ENCODE measurements at regions of chr15 and their contacts with region 1.

Region 1: GRCh38 chr15:40038638-40039543 is at the start of gene SRP14:
- DNase-seq: peak; percentile 95
- ATAC-seq: peak; percentile 96
- H3K4me3 ChIP-seq: peak within 1 kb of the TSS; percentile 72 to 99 (median 96)
- H3K4me3 Mint-ChIP-seq: peak within 1 kb of the TSS; percentile 97
- H3K27ac ChIP-seq: peak within 1 kb of the TSS; percentile 93 to 95
- H3K27ac Mint-ChIP-seq: peak within 1 kb of the TSS; percentile 92
- H3K4me1 ChIP-seq: peaks cover 14 to 21% of the 10 kb centered on the region in 2 donors
- H3K4me1 Mint-ChIP-seq: peaks cover 28% of the 10 kb centered on the region
- H3K27me3 ChIP-seq: no peaks in the 10 kb centered on the region
- H3K27me3 Mint-ChIP-seq: no peaks in the 10 kb centered on the region
- CTCF ChIP-seq: peak; percentile 23
- total RNA-seq, gene SRP14: 112 and 120 TPM in 2 replicates

Region 2: GRCh38 chr15:39782441-39783138 is 256.3 kb before region 1 on chr15 and contains the start of gene FSIP1:
- CTCF ChIA-PET with region 1: interaction called, 4 read pairs
- POLR2A ChIA-PET with region 1: interaction called, 5 read pairs
- intact Hi-C with region 1: loop called (anchors 2 kb)
- DNase-seq: peak; percentile 98
- ATAC-seq: peak; percentile 99
- H3K4me3 ChIP-seq: peak within 1 kb of the TSS; percentile 81 to 98 (median 91)
- H3K4me3 Mint-ChIP-seq: peak within 1 kb of the TSS; percentile 85
- H3K27ac ChIP-seq: peak within 1 kb of the TSS; percentile 63 to 83
- H3K27ac Mint-ChIP-seq: peak within 1 kb of the TSS; percentile 97
- H3K4me1 ChIP-seq: peaks cover 17 to 18% of the 10 kb centered on the region in 2 donors
- H3K4me1 Mint-ChIP-seq: peaks cover 43% of the 10 kb centered on the region
- H3K27me3 ChIP-seq: peaks cover 0 to 5% (median under 1%) of the 10 kb centered on the region in 4 experiments
- H3K27me3 Mint-ChIP-seq: peaks cover 5% of the 10 kb centered on the region
- CTCF ChIP-seq: no peak
- total RNA-seq, gene FSIP1: 0.44 and 0.49 TPM in 2 replicates

Region 3: GRCh38 chr15:39920510-39921273 is 118.2 kb before region 1 on chr15:
- CTCF ChIA-PET with region 1: no interaction called
- POLR2A ChIA-PET with region 1: no interaction called
- intact Hi-C with region 1: loop called (anchors 1 kb)
- DNase-seq: peak; percentile 83
- ATAC-seq: peak; percentile 95
- H3K4me3 ChIP-seq: peak overlapping the region; percentile 67 to 90 (median 71)
- H3K4me3 Mint-ChIP-seq: peak overlapping the region; percentile 92
- H3K27ac ChIP-seq: peak overlapping the region in 1 of 2 donors; percentile 37
- H3K27ac Mint-ChIP-seq: peak overlapping the region; percentile 84
- H3K4me1 ChIP-seq: peaks cover 21 to 23% of the 10 kb centered on the region in 2 donors
- H3K4me1 Mint-ChIP-seq: peaks cover 16% of the 10 kb centered on the region
- H3K27me3 ChIP-seq: peaks cover 0 to 31% (median 19%) of the 10 kb centered on the region in 4 experiments
- H3K27me3 Mint-ChIP-seq: peaks cover 19% of the 10 kb centered on the region
- CTCF ChIP-seq: no peak

Region 4: DNA sequence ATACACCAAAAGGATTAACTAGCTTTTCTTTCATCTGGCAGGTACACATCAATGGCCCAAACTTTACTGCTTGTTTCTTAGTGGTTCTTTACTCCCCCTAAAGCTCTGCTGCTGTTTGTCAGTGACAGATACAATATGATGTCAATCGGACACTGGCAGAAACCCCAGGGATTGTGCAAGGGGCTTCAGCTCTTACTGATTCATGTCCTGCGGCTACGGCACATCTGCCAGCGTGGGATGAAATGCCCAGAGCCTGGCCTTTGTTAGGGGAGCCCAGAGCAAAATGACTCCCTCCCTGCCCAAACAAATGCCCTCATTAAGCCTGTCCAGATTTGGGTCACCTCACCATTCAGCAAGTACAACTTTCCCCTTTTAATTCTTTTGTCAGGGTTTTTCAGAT is 28.2 kb before region 1 on chr15:
- CTCF ChIA-PET with region 1: no interaction called
- POLR2A ChIA-PET with region 1: no interaction called
- intact Hi-C with region 1: no loop called
- DNase-seq: no peak
- ATAC-seq: no peak
- H3K4me3 ChIP-seq: no peak overlapping the region
- H3K4me3 Mint-ChIP-seq: no peak overlapping the region
- H3K27ac ChIP-seq: no peak overlapping the region
- H3K27ac Mint-ChIP-seq: no peak overlapping the region
- H3K4me1 ChIP-seq: no peaks in the 10 kb centered on the region
- H3K4me1 Mint-ChIP-seq: no peaks in the 10 kb centered on the region
- H3K27me3 ChIP-seq: no peaks in the 10 kb centered on the region
- H3K27me3 Mint-ChIP-seq: no peaks in the 10 kb centered on the region
- CTCF ChIP-seq: no peak

Region 5: GRCh38 chr15:40160689-40161688 is 122.1 kb after region 1 on chr15 and contains the start of gene BUB1B:
- CTCF ChIA-PET with region 1: interaction called, 4 read pairs
- POLR2A ChIA-PET with region 1: no interaction called
- intact Hi-C with region 1: loop called (anchors 1 kb)
- DNase-seq: peak; percentile 96
- ATAC-seq: peak; percentile 97
- H3K4me3 ChIP-seq: peak within 1 kb of the TSS; percentile 56 to 77 (median 71)
- H3K4me3 Mint-ChIP-seq: no peak within 1 kb of the TSS
- H3K27ac ChIP-seq: no peak within 1 kb of the TSS
- H3K27ac Mint-ChIP-seq: no peak within 1 kb of the TSS
- H3K4me1 ChIP-seq: peaks cover 10 to 14% of the 10 kb centered on the region in 2 donors
- H3K4me1 Mint-ChIP-seq: peaks cover 7% of the 10 kb centered on the region
- H3K27me3 ChIP-seq: no peaks in the 10 kb centered on the region
- H3K27me3 Mint-ChIP-seq: no peaks in the 10 kb centered on the region
- CTCF ChIP-seq: no peak
- total RNA-seq, gene BUB1B: 2.9 and 4.4 TPM in 2 replicates

Region 6: GRCh38 chr15:40564591-40565332 is 525.9 kb after region 1 on chr15 and contains the start of gene CCDC32:
- CTCF ChIA-PET with region 1: no interaction called
- POLR2A ChIA-PET with region 1: no interaction called
- intact Hi-C with region 1: no loop called
- DNase-seq: peak; percentile 96
- ATAC-seq: peak; percentile 90
- H3K4me3 ChIP-seq: peak within 1 kb of the TSS; percentile 81 to 100 (median 89)
- H3K4me3 Mint-ChIP-seq: peak within 1 kb of the TSS; percentile 82
- H3K27ac ChIP-seq: peak within 1 kb of the TSS; percentile 87 to 97
- H3K27ac Mint-ChIP-seq: peak within 1 kb of the TSS; percentile 86
- H3K4me1 ChIP-seq: peaks cover 50 to 55% of the 10 kb centered on the region in 2 donors
- H3K4me1 Mint-ChIP-seq: peaks cover 62% of the 10 kb centered on the region
- H3K27me3 ChIP-seq: no peaks in the 10 kb centered on the region
- H3K27me3 Mint-ChIP-seq: no peaks in the 10 kb centered on the region
- CTCF ChIP-seq: no peak
- total RNA-seq, gene CCDC32: 76.6 and 78.4 TPM in 2 replicates